Mammary epithelial cell (primary cell): ENCODE measurements at regions of chr12 and their contacts with region 1.

Region 1: GRCh38 chr12:81644503-81644902 is 114.6 kb downstream of the PPFIA2 start:
- DNase-seq: peak; percentile 23
- H3K4me3 ChIP-seq: no peak overlapping the region
- H3K27ac ChIP-seq: no peak overlapping the region
- H3K4me1 ChIP-seq: no peaks in the 10 kb centered on the region
- H3K27me3 ChIP-seq: no peaks in the 10 kb centered on the region
- CTCF ChIP-seq: peak; percentile 39 to 56

Region 2: DNA sequence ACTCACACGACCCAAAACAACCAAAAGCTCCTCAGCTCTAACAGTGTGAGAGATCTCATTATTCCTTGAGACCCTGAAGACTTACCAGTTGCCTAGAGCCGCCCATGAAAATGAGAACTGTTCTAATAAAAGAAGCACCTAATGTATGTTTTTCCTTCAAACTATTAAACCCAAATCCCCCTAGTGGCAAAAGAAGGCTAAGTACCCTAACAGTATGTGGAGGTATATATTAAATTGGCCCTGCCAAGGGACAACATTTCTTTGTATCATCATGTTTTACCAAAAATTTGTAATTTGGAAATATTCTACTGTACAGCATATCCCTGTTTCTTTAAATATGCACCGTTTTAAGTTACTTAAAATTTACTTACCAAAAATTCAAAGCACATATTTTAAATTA is 152.6 kb after region 1 on chr12:
- CTCF ChIA-PET with region 1: no interaction called
- dilution Hi-C with region 1: no loop called
- in situ Hi-C with region 1: no loop called
- intact Hi-C with region 1: loop called (anchors 10 kb)
- DNase-seq: peak; percentile 2
- H3K4me3 ChIP-seq: no peak overlapping the region
- H3K27ac ChIP-seq: no peak overlapping the region
- H3K4me1 ChIP-seq: no peaks in the 10 kb centered on the region
- H3K27me3 ChIP-seq: no peaks in the 10 kb centered on the region
- CTCF ChIP-seq: peak; percentile 46 to 53

Region 3: DNA sequence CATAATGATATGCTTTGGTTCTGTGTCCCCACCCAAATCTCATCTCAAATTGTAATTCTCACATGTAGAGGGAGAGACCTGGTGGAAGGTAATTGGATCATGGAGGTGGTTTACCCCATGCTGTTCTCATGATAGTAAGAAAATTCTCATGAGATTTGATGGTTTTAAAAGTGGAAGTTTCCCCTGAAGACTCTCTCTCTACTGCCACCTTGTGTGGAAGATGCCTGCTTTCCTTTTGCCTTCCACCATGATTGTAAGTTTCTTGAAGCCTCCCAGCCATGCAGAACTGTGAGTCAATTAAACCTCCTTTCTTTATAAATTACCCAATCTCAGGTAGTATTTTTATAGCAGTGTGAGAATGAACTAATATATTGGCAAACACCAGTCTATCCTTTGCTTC is 375.0 kb after region 1 on chr12:
- CTCF ChIA-PET with region 1: no interaction called
- dilution Hi-C with region 1: no loop called
- in situ Hi-C with region 1: no loop called
- intact Hi-C with region 1: loop called (anchors 10 kb)
- DNase-seq: no peak
- H3K4me3 ChIP-seq: no peak overlapping the region
- H3K27ac ChIP-seq: no peak overlapping the region
- H3K4me1 ChIP-seq: no peaks in the 10 kb centered on the region
- H3K27me3 ChIP-seq: no peaks in the 10 kb centered on the region
- CTCF ChIP-seq: peak; percentile 37 to 62

Region 4: DNA sequence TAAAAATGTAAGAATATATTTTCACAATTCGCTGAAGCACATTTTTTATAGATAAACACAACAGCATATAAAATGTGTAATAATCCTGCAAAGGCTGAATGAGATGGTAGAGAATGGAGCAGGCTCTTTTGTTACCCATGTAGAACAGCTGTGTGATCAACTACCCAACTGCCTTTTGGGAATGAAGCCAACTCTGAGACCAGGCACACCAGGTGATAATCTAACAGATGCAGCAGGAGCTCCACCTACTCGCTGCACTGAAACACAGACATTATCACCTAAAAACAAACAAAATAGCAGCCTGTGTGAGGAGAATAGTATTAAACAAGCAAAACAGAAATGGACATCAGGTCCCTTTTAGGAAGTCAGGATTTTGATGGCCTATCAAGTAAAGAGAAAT is 530.4 kb after region 1 on chr12:
- CTCF ChIA-PET with region 1: no interaction called
- dilution Hi-C with region 1: no loop called
- in situ Hi-C with region 1: no loop called
- intact Hi-C with region 1: loop called (anchors 10 kb)
- DNase-seq: no peak
- H3K4me3 ChIP-seq: no peak overlapping the region
- H3K27ac ChIP-seq: no peak overlapping the region
- H3K4me1 ChIP-seq: no peaks in the 10 kb centered on the region
- H3K27me3 ChIP-seq: no peaks in the 10 kb centered on the region
- CTCF ChIP-seq: no peak

Region 5: GRCh38 chr12:82326905-82327503 is 682.5 kb after region 1 on chr12:
- CTCF ChIA-PET with region 1: no interaction called
- dilution Hi-C with region 1: no loop called
- in situ Hi-C with region 1: loop called in 1 of 2 experiments (anchors 25 kb)
- intact Hi-C with region 1: loop called (anchors 1 kb)
- DNase-seq: peak; percentile 2
- H3K4me3 ChIP-seq: no peak overlapping the region
- H3K27ac ChIP-seq: no peak overlapping the region
- H3K4me1 ChIP-seq: no peaks in the 10 kb centered on the region
- H3K27me3 ChIP-seq: no peaks in the 10 kb centered on the region
- CTCF ChIP-seq: peak; percentile 56 to 59

Region 6: GRCh38 chr12:82358200-82359114 is 714.0 kb after region 1 on chr12 and contains the starts of genes CCDC59 and METTL25:
- CTCF ChIA-PET with region 1: no interaction called
- dilution Hi-C with region 1: no loop called
- in situ Hi-C with region 1: no loop called
- intact Hi-C with region 1: loop called (anchors 1 kb)
- DNase-seq: peak; percentile 97
- H3K4me3 ChIP-seq: peak within 1 kb of the TSS; percentile 75 to 98 (median 93)
- H3K27ac ChIP-seq: peak within 1 kb of the TSS; percentile 95
- H3K4me1 ChIP-seq: peaks cover 16% of the 10 kb centered on the region
- H3K27me3 ChIP-seq: no peaks in the 10 kb centered on the region
- CTCF ChIP-seq: peak; percentile 52 to 80
- total RNA-seq, gene CCDC59: 34.7 to 59.5 TPM
- total RNA-seq, gene METTL25: 5.7 to 9.8 TPM